Panc1 (cell line): ENCODE measurements at regions of chr7 and their contacts with region 1.

Region 1: GRCh38 chr7:124152859-124153692 is 120.2 kb upstream of the TMEM229A start:
- DNase-seq: no peak
- ATAC-seq: peak; percentile 76
- H3K4me3 ChIP-seq: no peak overlapping the region
- H3K27ac ChIP-seq: no peak overlapping the region
- H3K4me1 ChIP-seq: no peaks in the 10 kb centered on the region
- H3K27me3 ChIP-seq: no peaks in the 10 kb centered on the region
- CTCF ChIP-seq: peak; percentile 59

Region 2: GRCh38 chr7:124784879-124785818 is 632.1 kb after region 1 on chr7:
- CTCF ChIA-PET with region 1: interaction called, 7 read pairs
- POLR2A ChIA-PET with region 1: no interaction called
- in situ Hi-C with region 1: no loop called
- intact Hi-C with region 1: loop called (anchors 1 kb)
- DNase-seq: peak; percentile 55
- ATAC-seq: peak; percentile 82; the same call in 1 of the 2 replicates
- H3K4me3 ChIP-seq: no peak overlapping the region
- H3K27ac ChIP-seq: no peak overlapping the region
- H3K4me1 ChIP-seq: no peaks in the 10 kb centered on the region
- H3K27me3 ChIP-seq: peaks cover 2% of the 10 kb centered on the region; the same call in 1 of the 2 replicates
- CTCF ChIP-seq: peak; percentile 85

Region 3: DNA sequence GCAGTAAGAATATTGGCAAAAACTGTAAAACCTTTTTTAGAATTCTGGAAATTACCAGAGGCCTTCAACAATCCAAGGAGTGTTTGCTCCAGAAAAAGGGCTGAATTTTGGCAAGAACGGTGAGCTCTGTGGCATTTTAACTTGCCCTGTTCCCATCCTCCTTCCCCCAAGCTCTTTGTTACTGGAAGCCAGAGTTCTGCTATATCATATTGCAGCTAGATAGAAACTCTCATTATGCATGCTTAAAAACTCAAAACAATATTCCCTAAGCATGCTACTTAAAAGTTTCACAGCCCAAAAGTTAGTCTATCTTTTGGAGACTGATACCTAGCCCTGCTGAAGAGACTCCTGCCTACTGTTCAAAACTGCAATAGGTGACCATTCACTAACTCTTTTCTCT is 683.1 kb after region 1 on chr7:
- CTCF ChIA-PET with region 1: no interaction called
- POLR2A ChIA-PET with region 1: no interaction called
- in situ Hi-C with region 1: no loop called
- intact Hi-C with region 1: loop called (anchors 10 kb)
- DNase-seq: no peak
- ATAC-seq: no peak
- H3K4me3 ChIP-seq: no peak overlapping the region
- H3K27ac ChIP-seq: no peak overlapping the region
- H3K4me1 ChIP-seq: no peaks in the 10 kb centered on the region
- H3K27me3 ChIP-seq: no peaks in the 10 kb centered on the region
- CTCF ChIP-seq: no peak

Region 4: GRCh38 chr7:124856299-124856888 is 703.3 kb after region 1 on chr7:
- CTCF ChIA-PET with region 1: no interaction called
- POLR2A ChIA-PET with region 1: no interaction called
- in situ Hi-C with region 1: no loop called
- intact Hi-C with region 1: loop called (anchors 1 kb)
- DNase-seq: peak; percentile 39
- ATAC-seq: 0 out of 2 replicates have a peak, but pooled peaks have one; percentile 53
- H3K4me3 ChIP-seq: no peak overlapping the region
- H3K27ac ChIP-seq: no peak overlapping the region
- H3K4me1 ChIP-seq: no peaks in the 10 kb centered on the region
- H3K27me3 ChIP-seq: no peaks in the 10 kb centered on the region
- CTCF ChIP-seq: peak; percentile 72; the same call in 1 of the 2 replicates